Calu3 (cell line): ENCODE measurements at regions of chr1 and their contacts with region 1.

Region 1: GRCh38 chr1:152034646-152035405 is 2.0 kb downstream of the S100A11 start:
- DNase-seq: peak; percentile 85
- H3K4me3 Mint-ChIP-seq: peak overlapping the region; percentile 75
- H3K27ac Mint-ChIP-seq: peak overlapping the region; percentile 90
- H3K4me1 Mint-ChIP-seq: peaks cover 22% of the 10 kb centered on the region
- H3K27me3 Mint-ChIP-seq: no peaks in the 10 kb centered on the region
- CTCF ChIP-seq: peak; percentile 95

Region 2: DNA sequence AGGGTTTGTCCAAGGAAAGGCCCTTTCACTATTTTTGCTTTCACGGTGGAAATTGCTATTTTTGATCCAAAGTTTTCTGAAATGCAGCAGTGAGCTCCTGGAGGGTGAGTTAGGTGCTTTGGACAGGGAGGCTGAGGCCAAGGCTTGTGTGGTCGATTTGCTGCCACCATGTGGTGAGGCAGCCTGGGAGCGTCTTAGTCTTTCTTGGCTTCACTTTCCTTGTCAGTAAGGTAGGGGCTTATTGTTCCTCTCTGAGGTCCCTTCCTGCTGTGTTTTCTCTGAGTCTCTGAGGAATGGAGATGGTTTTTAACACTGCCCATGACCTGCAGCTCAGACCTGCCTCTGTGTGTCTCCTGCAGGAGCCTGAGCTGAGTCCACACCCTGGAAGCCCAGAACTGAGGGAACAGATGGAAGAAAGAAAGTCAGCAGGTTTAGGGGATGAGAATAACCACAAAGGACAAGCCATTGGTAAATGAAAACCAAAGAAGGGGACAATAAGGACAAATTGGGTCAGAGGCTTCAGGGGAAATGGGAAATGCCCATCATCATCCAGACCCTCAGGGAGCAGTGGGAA is 21.1 kb before region 1 on chr1:
- CTCF ChIA-PET with region 1: interaction called, 13 read pairs
- intact Hi-C with region 1: no loop called
- DNase-seq: peak; percentile 77
- H3K4me3 Mint-ChIP-seq: no peak overlapping the region
- H3K27ac Mint-ChIP-seq: no peak overlapping the region
- H3K4me1 Mint-ChIP-seq: peaks cover 18% of the 10 kb centered on the region
- H3K27me3 Mint-ChIP-seq: no peaks in the 10 kb centered on the region
- CTCF ChIP-seq: peak; percentile 78

Region 3: DNA sequence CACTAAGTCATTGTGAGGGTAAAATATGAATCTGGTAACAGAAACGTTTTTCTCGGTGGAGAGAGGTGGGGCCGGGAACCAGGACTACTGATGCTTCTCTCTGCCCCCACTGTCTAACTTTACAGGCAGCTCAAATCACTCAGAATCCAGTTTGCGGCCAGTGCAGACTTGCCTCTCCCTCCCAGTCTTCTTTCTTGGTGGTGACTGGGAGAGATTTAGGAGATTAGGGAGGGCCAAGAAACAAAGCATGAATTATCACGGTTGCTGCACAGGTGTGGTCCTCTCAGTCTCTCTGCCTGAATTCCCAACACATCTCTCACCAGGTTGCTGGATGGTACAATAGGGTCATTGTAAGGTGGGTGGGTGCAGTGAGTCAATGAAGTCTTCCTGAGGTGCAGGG is 10.7 kb before region 1 on chr1:
- CTCF ChIA-PET with region 1: interaction called, 15 read pairs
- intact Hi-C with region 1: no loop called
- DNase-seq: peak; percentile 69
- H3K4me3 Mint-ChIP-seq: peak overlapping the region; percentile 7
- H3K27ac Mint-ChIP-seq: peak overlapping the region; percentile 37
- H3K4me1 Mint-ChIP-seq: peaks cover 61% of the 10 kb centered on the region
- H3K27me3 Mint-ChIP-seq: no peaks in the 10 kb centered on the region
- CTCF ChIP-seq: no peak

Region 4: DNA sequence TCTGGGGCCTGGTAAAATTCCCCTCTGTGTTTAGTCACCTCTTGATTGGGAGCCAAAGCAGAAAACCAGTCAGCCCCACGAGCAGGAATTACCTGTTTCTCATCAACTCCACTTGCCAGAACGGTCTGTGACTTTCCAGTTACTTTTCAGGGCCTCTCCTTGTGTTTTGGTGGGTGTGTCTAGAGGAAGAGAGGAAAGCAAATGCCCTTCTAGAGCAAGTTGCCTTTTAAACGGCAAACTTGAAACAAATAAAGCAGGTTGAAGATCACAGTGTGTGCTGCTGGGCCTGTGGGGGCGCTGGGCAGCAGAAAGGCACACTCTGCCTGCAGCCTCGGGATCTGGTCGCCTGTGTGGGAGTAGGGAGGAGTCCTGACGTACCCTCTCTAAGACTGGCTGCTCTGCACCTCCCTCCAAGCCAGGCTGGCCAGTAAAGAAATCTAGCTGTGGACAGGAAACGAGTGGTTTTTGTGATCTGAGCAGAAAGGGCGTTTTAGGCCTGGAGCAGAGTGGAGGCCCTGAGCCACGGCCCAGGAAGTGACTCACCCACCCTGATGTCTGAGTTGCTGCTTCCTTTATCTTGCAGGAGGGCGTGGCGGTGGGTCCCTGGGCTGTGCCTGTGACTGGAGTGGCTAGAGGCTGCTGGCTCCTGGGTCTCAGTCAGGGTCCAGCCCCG is 13.0 kb after region 1 on chr1:
- CTCF ChIA-PET with region 1: interaction called, 59 read pairs
- intact Hi-C with region 1: loop called (anchors 2 kb)
- DNase-seq: peak; percentile 96
- H3K4me3 Mint-ChIP-seq: peak overlapping the region; percentile 48
- H3K27ac Mint-ChIP-seq: peak overlapping the region; percentile 84
- H3K4me1 Mint-ChIP-seq: peaks cover 41% of the 10 kb centered on the region
- H3K27me3 Mint-ChIP-seq: peaks cover 4% of the 10 kb centered on the region
- CTCF ChIP-seq: no peak